CD8-positive, alpha-beta T cell (primary cell): ENCODE measurements at regions of chr3 and their contacts with region 1.

Region 1: DNA sequence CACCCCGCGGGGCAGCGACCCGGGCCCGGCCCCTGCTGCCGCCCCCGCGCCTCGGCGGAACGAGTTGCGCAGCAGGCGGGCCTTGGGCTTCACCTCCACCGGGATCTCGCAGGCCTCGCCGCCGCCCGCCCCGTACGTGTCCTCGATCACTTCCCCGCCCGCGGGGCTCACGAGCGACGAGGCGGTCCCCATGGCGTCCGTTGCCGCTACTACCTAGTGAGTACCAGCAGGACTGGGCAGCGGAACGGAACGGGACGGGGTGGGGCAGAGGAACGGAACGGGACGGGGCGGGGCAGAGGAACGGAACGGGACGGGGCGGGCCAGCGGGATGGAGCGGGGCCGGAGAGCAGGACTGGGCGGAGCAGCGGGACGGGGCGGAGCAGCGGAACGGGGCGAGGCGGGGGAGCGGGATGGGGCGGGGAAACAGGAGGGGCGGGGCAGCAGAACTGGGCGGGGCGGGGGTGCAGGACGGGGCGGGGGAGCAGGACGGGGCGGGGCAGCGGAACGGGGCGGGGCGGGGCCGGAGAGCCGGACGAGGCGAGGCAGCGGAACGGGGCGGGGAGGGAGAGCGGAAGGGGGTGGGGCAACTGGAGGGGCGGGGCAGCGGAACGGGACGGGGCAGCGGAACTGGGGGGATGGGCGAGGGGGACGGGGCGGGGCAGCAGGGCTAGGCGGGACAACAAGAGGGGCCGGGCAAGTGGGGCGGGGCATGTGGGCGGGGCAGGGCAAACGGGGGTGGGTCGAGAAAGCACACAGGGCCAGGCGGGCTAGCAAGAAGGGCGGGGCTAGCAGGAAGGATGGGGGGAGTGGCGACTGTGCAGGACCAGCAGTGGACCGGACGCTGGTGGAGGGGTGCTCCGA is at the start of gene NPHP3:
- DNase-seq: peak; percentile 95 to 98 (median 97)
- ATAC-seq: peak; percentile 76
- H3K4me3 ChIP-seq: peak within 1 kb of the TSS; percentile 88 to 92
- H3K4me3 Mint-ChIP-seq: peak within 1 kb of the TSS; percentile 91
- H3K27ac ChIP-seq: peak within 1 kb of the TSS; percentile 59 to 67
- H3K27ac Mint-ChIP-seq: peak within 1 kb of the TSS; percentile 88
- H3K4me1 ChIP-seq: peaks cover 25% of the 10 kb centered on the region
- H3K4me1 Mint-ChIP-seq: peaks cover 42% of the 10 kb centered on the region
- H3K27me3 ChIP-seq: no peaks in the 10 kb centered on the region
- H3K27me3 Mint-ChIP-seq: no peaks in the 10 kb centered on the region
- CTCF ChIP-seq: no peak
- total RNA-seq, gene NPHP3: 21.9 to 24.6 TPM

Region 2: GRCh38 chr3:131026321-131027178 is 1695.8 kb before region 1 on chr3 and contains the starts of genes ASTE1 and NEK11:
- CTCF ChIA-PET with region 1: no interaction called
- POLR2A ChIA-PET with region 1: no interaction called
- intact Hi-C with region 1: loop called (anchors 1 to 5 kb)
- DNase-seq: peak; percentile 88 to 95 (median 92)
- ATAC-seq: peak; percentile 96
- H3K4me3 ChIP-seq: peak within 1 kb of the TSS; percentile 90 to 97
- H3K4me3 Mint-ChIP-seq: peak within 1 kb of the TSS; percentile 94
- H3K27ac ChIP-seq: peak within 1 kb of the TSS; percentile 91 to 96
- H3K27ac Mint-ChIP-seq: peak within 1 kb of the TSS; percentile 99
- H3K4me1 ChIP-seq: peaks cover 49% of the 10 kb centered on the region
- H3K4me1 Mint-ChIP-seq: peaks cover 52% of the 10 kb centered on the region
- H3K27me3 ChIP-seq: no peaks in the 10 kb centered on the region
- H3K27me3 Mint-ChIP-seq: no peaks in the 10 kb centered on the region
- CTCF ChIP-seq: no peak
- total RNA-seq, gene ASTE1: 24.6 to 25.9 TPM
- total RNA-seq, gene NEK11: 3.6 to 3.8 TPM

Region 3: GRCh38 chr3:132416807-132417694 is 305.3 kb before region 1 on chr3 and contains the start of gene DNAJC13:
- CTCF ChIA-PET with region 1: no interaction called
- POLR2A ChIA-PET with region 1: interaction called, 3 read pairs
- intact Hi-C with region 1: loop called (anchors 1 kb)
- DNase-seq: peak; percentile 84 to 97 (median 91)
- ATAC-seq: peak; percentile 91
- H3K4me3 ChIP-seq: peak within 1 kb of the TSS; percentile 61 to 99
- H3K4me3 Mint-ChIP-seq: peak within 1 kb of the TSS; percentile 98
- H3K27ac ChIP-seq: peak within 1 kb of the TSS; percentile 67 to 90
- H3K27ac Mint-ChIP-seq: peak within 1 kb of the TSS; percentile 95
- H3K4me1 ChIP-seq: peaks cover 10% of the 10 kb centered on the region
- H3K4me1 Mint-ChIP-seq: peaks cover 32% of the 10 kb centered on the region
- H3K27me3 ChIP-seq: no peaks in the 10 kb centered on the region
- H3K27me3 Mint-ChIP-seq: no peaks in the 10 kb centered on the region
- CTCF ChIP-seq: no peak
- total RNA-seq, gene DNAJC13: 8.1 to 8.5 TPM

Region 4: GRCh38 chr3:133426721-133427120 is 704.3 kb after region 1 on chr3:
- CTCF ChIA-PET with region 1: interaction called, 43 read pairs
- POLR2A ChIA-PET with region 1: no interaction called
- intact Hi-C with region 1: loop called (anchors 1 kb)
- DNase-seq: no peak
- ATAC-seq: no peak
- H3K4me3 ChIP-seq: no peak overlapping the region
- H3K4me3 Mint-ChIP-seq: no peak overlapping the region
- H3K27ac ChIP-seq: no peak overlapping the region
- H3K27ac Mint-ChIP-seq: no peak overlapping the region
- H3K4me1 ChIP-seq: no peaks in the 10 kb centered on the region
- H3K4me1 Mint-ChIP-seq: peaks cover 4% of the 10 kb centered on the region
- H3K27me3 ChIP-seq: no peaks in the 10 kb centered on the region
- H3K27me3 Mint-ChIP-seq: no peaks in the 10 kb centered on the region
- CTCF ChIP-seq: no peak

Region 5: GRCh38 chr3:133573054-133573628 is 850.7 kb after region 1 on chr3:
- CTCF ChIA-PET with region 1: interaction called, 16 read pairs
- POLR2A ChIA-PET with region 1: no interaction called
- intact Hi-C with region 1: loop called in 1 of 2 experiments (anchors 1 kb)
- DNase-seq: peak; percentile 100
- ATAC-seq: peak; percentile 83
- H3K4me3 ChIP-seq: peak overlapping the region; percentile 45 to 58
- H3K4me3 Mint-ChIP-seq: peak overlapping the region; percentile 89
- H3K27ac ChIP-seq: peak overlapping the region; percentile 76 to 93
- H3K27ac Mint-ChIP-seq: peak overlapping the region; percentile 99
- H3K4me1 ChIP-seq: peaks cover 38% of the 10 kb centered on the region
- H3K4me1 Mint-ChIP-seq: peaks cover 58% of the 10 kb centered on the region
- H3K27me3 ChIP-seq: no peaks in the 10 kb centered on the region
- H3K27me3 Mint-ChIP-seq: no peaks in the 10 kb centered on the region
- CTCF ChIP-seq: no peak

Region 6: GRCh38 chr3:133927540-133928066 is 1205.2 kb after region 1 on chr3:
- CTCF ChIA-PET with region 1: interaction called, 15 read pairs
- POLR2A ChIA-PET with region 1: no interaction called
- intact Hi-C with region 1: loop called (anchors 1 kb)
- DNase-seq: peak; percentile 57 to 89 (median 79)
- ATAC-seq: peak; percentile 98
- H3K4me3 ChIP-seq: peak overlapping the region; percentile 43 to 67
- H3K4me3 Mint-ChIP-seq: peak overlapping the region; percentile 73
- H3K27ac ChIP-seq: no peak overlapping the region
- H3K27ac Mint-ChIP-seq: no peak overlapping the region
- H3K4me1 ChIP-seq: peaks cover 13% of the 10 kb centered on the region
- H3K4me1 Mint-ChIP-seq: peaks cover 14% of the 10 kb centered on the region
- H3K27me3 ChIP-seq: peaks cover 0 to 4% of the 10 kb centered on the region in 2 experiments
- H3K27me3 Mint-ChIP-seq: peaks cover 8% of the 10 kb centered on the region
- CTCF ChIP-seq: peak; percentile 76

Region 7: DNA sequence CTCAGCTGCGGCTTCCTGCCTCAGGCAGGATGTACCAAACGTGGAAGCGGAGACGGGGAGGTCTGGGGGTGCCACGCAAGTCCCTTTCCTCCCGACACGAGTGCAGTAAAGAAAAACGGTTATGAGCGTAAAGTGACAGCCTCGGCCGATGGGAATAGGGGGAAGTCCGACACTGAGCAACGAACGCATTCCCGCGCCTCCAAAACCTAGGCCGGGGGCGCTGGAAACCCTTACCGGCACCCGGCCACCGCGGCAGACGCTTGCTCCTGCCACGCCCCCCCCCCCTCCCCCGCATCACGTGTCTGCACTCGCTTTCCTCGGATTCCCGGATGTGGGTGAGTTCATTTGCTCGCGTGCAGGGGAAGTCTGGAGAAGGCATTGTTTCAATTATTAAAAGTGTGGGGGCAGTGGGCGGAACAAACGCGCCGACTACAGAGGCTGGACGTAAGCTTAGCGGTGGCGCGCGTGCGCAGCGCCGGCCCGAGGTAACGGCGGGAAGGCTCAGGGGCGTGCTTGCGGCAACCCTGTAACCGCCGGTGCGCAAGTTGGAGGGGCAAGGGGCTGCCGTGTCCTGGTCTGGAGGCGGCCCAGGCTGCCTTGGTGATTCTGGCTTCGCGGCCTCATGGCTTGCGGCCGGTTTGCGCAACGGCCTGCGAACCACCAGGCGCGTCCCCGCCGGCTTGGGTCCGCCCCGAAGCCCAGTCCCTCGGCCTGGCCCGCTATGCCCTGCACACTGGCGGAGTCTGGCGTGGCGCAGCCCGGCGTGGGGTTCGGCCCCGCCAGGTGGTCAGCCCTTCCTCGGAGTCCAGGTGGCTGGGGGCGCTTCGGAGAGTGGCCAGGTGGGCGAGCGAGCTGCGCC is 1763.6 kb after region 1 on chr3 and contains the starts of genes ANAPC13 and CEP63:
- CTCF ChIA-PET with region 1: no interaction called
- POLR2A ChIA-PET with region 1: interaction called, 3 read pairs
- intact Hi-C with region 1: loop called (anchors 1 to 5 kb)
- DNase-seq: peak; percentile 87 to 99 (median 93)
- ATAC-seq: peak; percentile 80
- H3K4me3 ChIP-seq: peak within 1 kb of the TSS; percentile 88 to 96
- H3K4me3 Mint-ChIP-seq: peak within 1 kb of the TSS; percentile 100
- H3K27ac ChIP-seq: peak within 1 kb of the TSS; percentile 88 to 96
- H3K27ac Mint-ChIP-seq: peak within 1 kb of the TSS; percentile 99
- H3K4me1 ChIP-seq: peaks cover 36% of the 10 kb centered on the region
- H3K4me1 Mint-ChIP-seq: peaks cover 60% of the 10 kb centered on the region
- H3K27me3 ChIP-seq: no peaks in the 10 kb centered on the region
- H3K27me3 Mint-ChIP-seq: no peaks in the 10 kb centered on the region
- CTCF ChIP-seq: no peak
- total RNA-seq, gene ANAPC13: 15.5 to 15.9 TPM
- total RNA-seq, gene CEP63: 14.6 to 16.9 TPM